ENCODE measurements at regions of chr1 and their contacts with region 1.

Region 1: GRCh38 chr1:75724472-75725022 is at the start of gene ACADM:
- DNase-seq: peak; percentile 75 to 88
- ATAC-seq: peak; percentile 91 to 96 (median 94)
- H3K4me3 ChIP-seq: peak within 1 kb of the TSS; percentile 100
- H3K4me3 Mint-ChIP-seq: peak within 1 kb of the TSS; percentile 97
- H3K27ac ChIP-seq: peak within 1 kb of the TSS; percentile 92
- H3K27ac Mint-ChIP-seq: peak within 1 kb of the TSS; percentile 83 to 99
- H3K4me1 ChIP-seq: peaks cover 7% of the 10 kb centered on the region
- H3K4me1 Mint-ChIP-seq: peaks cover 30 to 41% of the 10 kb centered on the region in 2 donors
- H3K27me3 ChIP-seq: no peaks in the 10 kb centered on the region
- H3K27me3 Mint-ChIP-seq: peaks cover 0 to 2% of the 10 kb centered on the region in 2 donors
- CTCF ChIP-seq: no peak
- total RNA-seq, gene ACADM: 15.2 to 20.9 (median 17.7) TPM

Region 2: DNA sequence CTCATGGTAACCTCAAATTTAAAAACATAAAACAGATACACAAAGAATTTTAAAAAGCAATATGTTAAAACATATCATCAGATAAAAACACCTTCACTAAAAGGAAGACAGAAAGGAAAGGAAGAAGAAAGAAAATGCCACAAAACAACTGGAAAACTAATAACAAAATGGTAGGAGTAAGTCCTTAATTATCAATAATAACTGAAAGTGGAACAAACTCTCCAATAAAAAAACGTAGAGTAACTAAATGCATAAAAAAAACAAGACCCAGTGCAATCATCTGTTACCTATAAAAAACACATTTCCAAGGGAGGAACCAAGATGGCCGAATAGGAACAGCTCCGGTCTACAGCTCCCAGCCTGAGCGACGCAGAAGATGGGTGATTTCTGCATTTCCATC is 47.1 kb before region 1 on chr1:
- intact Hi-C with region 1: no loop called
- DNase-seq: no peak
- ATAC-seq: no peak
- H3K4me3 ChIP-seq: no peak overlapping the region
- H3K4me3 Mint-ChIP-seq: no peak overlapping the region
- H3K27ac ChIP-seq: no peak overlapping the region
- H3K27ac Mint-ChIP-seq: no peak overlapping the region
- H3K4me1 ChIP-seq: no peaks in the 10 kb centered on the region
- H3K4me1 Mint-ChIP-seq: no peaks in the 10 kb centered on the region
- H3K27me3 ChIP-seq: no peaks in the 10 kb centered on the region
- H3K27me3 Mint-ChIP-seq: peaks cover 13 to 14% of the 10 kb centered on the region in 2 donors
- CTCF ChIP-seq: no peak

Region 3: DNA sequence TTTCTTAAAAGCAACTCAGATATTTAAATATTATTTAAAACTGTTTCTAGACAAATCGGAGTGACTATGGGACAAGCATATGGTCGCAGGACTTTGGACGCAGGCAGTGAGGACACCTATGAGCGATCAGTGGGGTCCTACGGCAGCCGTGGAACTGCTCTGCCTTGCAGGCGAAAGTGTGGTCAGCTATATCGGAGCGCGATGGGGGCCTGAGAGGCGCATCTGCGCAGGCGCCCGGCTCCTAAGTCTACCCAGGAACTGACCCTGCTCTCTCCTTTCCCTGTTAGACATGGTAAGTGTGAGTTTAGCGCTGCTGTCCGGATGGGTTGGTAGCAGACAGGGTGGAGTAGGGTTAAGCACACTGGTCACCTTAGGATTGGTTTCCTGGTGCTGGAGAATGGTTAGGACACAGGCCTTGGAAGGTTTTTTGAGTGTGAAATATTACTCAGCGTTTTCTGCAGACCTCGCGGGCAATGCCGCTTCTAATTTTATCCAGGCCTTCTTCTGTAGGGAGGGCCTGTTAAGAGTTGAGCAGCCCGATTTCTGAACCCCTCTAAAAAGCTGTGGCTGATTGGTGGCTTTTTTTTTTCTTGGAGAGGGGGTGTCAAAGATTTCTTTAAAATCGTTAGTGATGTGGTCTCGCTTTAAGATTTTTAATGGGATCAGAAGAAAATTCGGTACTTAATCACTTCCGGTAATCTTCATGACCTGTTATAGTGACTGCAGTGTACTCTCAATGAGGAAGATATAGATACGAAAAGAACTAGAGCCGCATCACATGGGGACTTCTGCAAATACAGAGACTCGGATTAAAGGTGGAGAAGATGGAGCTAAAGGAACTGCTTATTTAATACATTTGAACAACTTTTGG is 61.7 kb after region 1 on chr1 and contains the start of gene RABGGTB:
- intact Hi-C with region 1: loop called (anchors 1 kb)
- DNase-seq: peak; percentile 91 to 98
- ATAC-seq: peak; percentile 86 to 96 (median 90)
- H3K4me3 ChIP-seq: peak within 1 kb of the TSS; percentile 63
- H3K4me3 Mint-ChIP-seq: peak within 1 kb of the TSS; percentile 98
- H3K27ac ChIP-seq: peak within 1 kb of the TSS; percentile 67
- H3K27ac Mint-ChIP-seq: peak within 1 kb of the TSS; percentile 95 to 96
- H3K4me1 ChIP-seq: peaks cover 31% of the 10 kb centered on the region
- H3K4me1 Mint-ChIP-seq: peaks cover 71 to 72% of the 10 kb centered on the region in 2 donors
- H3K27me3 ChIP-seq: no peaks in the 10 kb centered on the region
- H3K27me3 Mint-ChIP-seq: no peaks in the 10 kb centered on the region
- CTCF ChIP-seq: no peak
- total RNA-seq, gene RABGGTB: 100.0 to 120 (median 118) TPM

Measured in natural killer cell (primary cell).